ENCODE measurements at regions of chr15 and their contacts with region 1.

Region 1: GRCh38 chr15:53851110-53851848 is 91.8 kb upstream of the WDR72 start:
- DNase-seq: no peak
- ATAC-seq: no peak
- H3K4me3 ChIP-seq: no peak overlapping the region
- H3K4me3 Mint-ChIP-seq: no peak overlapping the region
- H3K27ac ChIP-seq: no peak overlapping the region
- H3K27ac Mint-ChIP-seq: no peak overlapping the region
- H3K4me1 ChIP-seq: no peaks in the 10 kb centered on the region
- H3K4me1 Mint-ChIP-seq: no peaks in the 10 kb centered on the region
- H3K27me3 ChIP-seq: no peaks in the 10 kb centered on the region
- H3K27me3 Mint-ChIP-seq: peaks cover 0 to 4% of the 10 kb centered on the region in 2 donors

Region 2: DNA sequence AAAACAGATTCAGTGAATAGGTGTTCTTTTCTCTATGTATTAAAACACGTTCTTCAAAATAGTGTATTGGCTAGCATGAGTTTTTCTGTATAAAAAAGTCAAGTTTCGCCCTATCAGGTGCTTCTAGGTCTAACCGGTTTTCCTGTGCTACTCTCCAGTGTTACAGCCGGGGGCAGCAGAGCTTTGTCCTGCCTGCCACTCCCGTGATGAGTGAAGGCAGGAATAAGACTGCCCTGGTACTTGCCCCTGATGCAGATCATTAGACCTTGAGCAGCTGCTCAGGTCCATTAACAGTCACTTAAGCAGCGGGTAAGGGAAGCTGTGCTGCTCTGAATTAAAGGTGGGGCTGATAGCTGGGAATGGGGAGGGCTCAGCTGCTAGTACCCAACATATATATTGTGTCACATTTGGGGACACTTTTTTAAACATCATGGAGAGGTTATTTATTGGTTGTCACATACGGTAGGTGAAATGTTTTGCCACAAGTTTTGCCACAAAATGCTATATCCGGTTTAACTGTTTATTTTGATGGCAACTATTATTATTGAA is 125.6 kb after region 1 on chr15:
- CTCF ChIA-PET with region 1: no interaction called
- POLR2A ChIA-PET with region 1: interaction called in 1 of 2 experiments, 10 read pairs
- DNase-seq: no peak
- ATAC-seq: no peak
- H3K4me3 ChIP-seq: no peak overlapping the region
- H3K4me3 Mint-ChIP-seq: no peak overlapping the region
- H3K27ac ChIP-seq: no peak overlapping the region
- H3K27ac Mint-ChIP-seq: no peak overlapping the region
- H3K4me1 ChIP-seq: no peaks in the 10 kb centered on the region
- H3K4me1 Mint-ChIP-seq: peaks cover 0 to 8% (median 6%) of the 10 kb centered on the region in 3 donors
- H3K27me3 ChIP-seq: peaks cover 5 to 8% of the 10 kb centered on the region in 2 experiments
- H3K27me3 Mint-ChIP-seq: peaks cover 23 to 30% of the 10 kb centered on the region in 2 donors